Left cardiac atrium (tissue), 4 donors: ENCODE measurements at regions of chr6 and their contacts with region 1.

Region 1: DNA sequence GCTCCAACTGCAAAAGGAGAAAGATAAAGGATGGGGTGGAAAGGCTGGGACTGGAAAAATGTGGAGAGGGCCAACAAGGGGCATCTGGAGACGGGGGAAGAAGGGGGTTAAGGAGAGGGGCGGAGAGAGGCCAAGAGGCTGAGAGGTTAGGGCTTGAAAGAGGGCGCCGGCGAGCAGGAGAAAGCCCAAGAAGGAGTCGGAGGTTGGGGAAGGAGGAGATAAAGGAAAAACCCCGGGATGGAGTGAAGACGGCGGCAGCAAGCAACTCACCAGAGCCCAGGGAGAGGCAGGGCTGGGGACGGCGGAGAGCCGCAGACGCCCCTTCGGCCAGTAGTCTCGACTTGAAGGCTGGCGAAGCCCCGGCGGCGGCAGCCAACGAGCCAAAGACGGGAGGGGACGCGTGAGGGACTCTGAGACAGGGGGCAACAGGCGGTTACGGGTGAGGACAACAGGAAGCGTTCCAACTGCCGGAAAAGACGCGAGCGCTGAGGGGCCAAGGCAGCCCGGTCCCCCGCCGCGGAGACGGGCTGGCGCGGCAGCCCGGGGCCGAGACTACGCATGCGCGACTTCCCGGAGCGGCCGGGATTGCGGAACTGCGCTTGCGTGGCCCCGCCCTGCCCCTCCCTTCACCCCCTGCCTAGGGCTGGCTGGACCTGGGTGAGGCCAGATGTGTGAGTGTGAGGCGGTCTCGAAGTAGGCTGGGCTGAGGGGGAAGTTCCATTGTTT is at the start of gene STK38:
- DNase-seq: peak; percentile 93
- ATAC-seq: peak; percentile 97 to 98
- total RNA-seq, gene STK38: 20.8 to 27.4 TPM

Region 2: DNA sequence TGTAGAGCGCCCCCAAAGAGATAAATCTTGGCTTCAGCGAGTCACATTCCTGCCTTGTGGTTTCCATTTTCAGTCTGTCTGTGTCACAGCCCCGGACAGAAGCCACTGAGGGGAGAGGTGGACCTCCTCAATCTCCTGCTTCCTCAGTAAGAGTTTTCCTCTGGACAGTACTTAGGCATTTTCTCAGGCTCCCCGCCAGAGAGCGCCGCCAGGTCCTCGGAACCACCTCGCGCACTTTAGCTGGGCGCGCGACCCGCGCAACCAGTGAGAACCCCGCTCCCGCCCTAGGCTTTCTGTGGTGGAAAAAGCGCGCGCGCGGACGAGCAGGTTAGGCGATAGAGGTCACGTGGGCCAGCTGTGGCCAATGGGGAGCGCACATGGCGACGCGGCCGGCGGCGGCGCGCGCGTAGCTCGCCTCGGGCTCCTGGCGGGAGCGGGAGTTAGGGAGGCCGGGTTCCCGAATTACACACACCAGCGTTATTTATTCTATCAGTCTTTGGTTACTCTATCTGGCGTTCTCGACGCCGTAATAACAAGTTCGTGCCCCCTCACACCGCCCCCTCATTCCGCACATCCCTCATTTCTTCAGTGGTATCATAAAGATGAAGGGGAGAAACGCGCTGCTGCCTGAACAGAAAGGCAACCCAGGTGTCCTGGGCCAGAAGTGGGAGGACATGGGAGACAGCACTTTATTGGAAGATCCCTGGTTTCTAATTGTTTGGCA is 123.8 kb before region 1 on chr6:
- intact Hi-C with region 1: loop called in 1 of 2 experiments (anchors 2 kb)
- DNase-seq: peak; percentile 100
- ATAC-seq: peak; percentile 100

Region 3: GRCh38 chr6:36703982-36704381 is 156.9 kb after region 1 on chr6:
- intact Hi-C with region 1: no loop called
- DNase-seq: no peak
- ATAC-seq: no peak